GM12878 (cell line): ENCODE measurements at regions of chr14 and their contacts with region 1.

Region 1: DNA sequence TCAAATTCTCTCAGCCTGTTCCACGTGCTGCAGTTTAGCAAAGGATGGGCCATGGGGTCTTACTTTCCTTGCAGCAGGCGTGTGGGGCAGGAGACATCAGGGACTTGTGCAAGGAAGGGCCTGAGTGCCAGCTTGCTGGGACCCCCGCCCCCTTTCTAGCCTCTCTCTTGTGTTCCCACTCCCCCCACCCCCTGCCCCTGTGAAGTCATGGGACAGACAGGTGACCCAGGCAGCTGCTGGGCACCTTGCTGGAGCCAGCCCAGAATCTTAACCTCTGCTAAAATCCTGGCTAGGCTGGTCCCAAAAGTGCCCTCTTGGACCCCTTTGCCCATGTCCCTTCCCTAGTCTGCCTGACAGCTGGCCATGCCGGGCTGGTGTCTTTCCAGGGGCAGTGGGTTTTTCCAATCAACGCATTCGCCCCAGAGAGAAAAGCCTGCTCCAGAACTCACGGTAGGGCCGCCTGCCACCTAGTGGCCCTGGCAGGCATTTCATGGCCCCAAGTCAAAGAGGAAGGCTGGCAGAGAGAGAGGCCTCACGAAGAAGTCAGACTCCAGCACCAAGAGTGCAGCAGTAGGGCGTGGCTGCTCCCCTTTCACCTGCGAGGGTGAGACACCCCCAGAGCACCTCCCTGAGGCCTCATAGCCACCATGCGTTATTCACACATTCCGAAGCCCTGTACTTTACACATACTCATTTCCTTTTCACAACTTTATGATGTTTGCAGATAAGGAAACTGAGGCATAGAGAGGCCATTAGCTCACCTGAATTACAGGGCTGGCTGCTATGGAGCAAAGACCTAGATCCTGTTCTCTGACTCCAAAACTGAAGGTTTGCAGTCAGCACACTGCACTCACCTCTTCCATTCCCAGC is 67.4 kb downstream of the LGMN start:
- DNase-seq: no peak
- ATAC-seq: peak; percentile 52
- H3K4me3 ChIP-seq: no peak overlapping the region
- H3K27ac ChIP-seq: no peak overlapping the region
- H3K4me1 ChIP-seq: peaks cover 28% of the 10 kb centered on the region
- H3K27me3 ChIP-seq: no peaks in the 10 kb centered on the region
- CTCF ChIP-seq: peak; percentile 84 to 91 (median 90)
- EP300 ChIP-seq: no peak
- POLR2A ChIP-seq: no peak
- RAD21 ChIP-seq: peak; percentile 97

Region 2: DNA sequence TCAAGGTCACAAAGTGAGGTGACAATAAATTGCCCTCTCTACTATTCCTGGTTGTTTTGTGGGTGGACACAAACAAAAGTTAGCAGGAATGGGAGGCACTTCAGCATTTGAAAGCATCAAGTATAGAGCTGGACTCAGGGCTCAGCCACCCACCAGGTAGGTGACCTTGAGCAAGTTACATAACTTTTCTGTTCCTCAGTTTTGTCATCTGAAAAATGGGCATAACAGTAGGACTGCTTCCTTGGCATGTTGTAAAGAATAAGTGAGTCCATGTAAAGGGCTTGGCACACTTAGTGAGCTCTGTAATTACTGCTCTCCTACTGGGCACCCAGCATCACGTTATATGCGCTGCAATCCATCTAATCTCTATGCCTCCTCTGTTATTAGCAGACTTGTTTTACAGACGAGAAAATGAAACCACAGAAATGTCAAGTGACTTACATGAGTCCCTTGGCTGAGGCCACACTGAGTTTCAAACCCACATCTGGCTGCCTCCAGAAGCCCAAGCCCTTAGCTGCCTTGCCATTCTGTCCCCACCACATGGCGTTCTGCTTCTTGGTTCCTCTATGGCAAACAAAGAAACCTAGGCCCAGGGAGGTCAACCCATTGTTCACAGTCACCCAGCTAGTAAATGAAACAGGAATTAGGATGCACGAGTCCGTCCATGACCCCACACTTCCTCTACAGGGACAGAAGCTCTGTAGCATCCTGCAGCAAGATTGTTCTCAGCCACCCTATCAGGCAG is 421.2 kb before region 1 on chr14:
- CTCF ChIA-PET with region 1: no interaction called
- POLR2A ChIA-PET with region 1: no interaction called
- RAD21 ChIA-PET with region 1: interaction called, 3 read pairs
- SMC1A ChIA-PET with region 1: no interaction called
- in situ Hi-C with region 1: no loop called
- intact Hi-C with region 1: loop called (anchors 1 kb)
- DNase-seq: peak; percentile 95
- ATAC-seq: peak; percentile 87
- H3K4me3 ChIP-seq: peak overlapping the region; percentile 20; the same call in 1 of the 2 replicates
- H3K27ac ChIP-seq: peak overlapping the region; percentile 87
- H3K4me1 ChIP-seq: peaks cover 34% of the 10 kb centered on the region
- H3K27me3 ChIP-seq: no peaks in the 10 kb centered on the region; a peak in 1 of 4 replicates
- CTCF ChIP-seq: peak in 1 of 3 experiments; percentile 13; a peak in 1 of 6 replicates
- EP300 ChIP-seq: peak; percentile 52 to 79; a peak in 3 of 4 replicates
- POLR2A ChIP-seq: 0 out of 2 replicates have a peak, but pooled peaks have one; percentile 22
- RAD21 ChIP-seq: 0 out of 2 replicates have a peak, but pooled peaks have one; percentile 10

Region 3: GRCh38 chr14:92456215-92457015 is 224.6 kb before region 1 on chr14:
- CTCF ChIA-PET with region 1: interaction called, 7 read pairs
- POLR2A ChIA-PET with region 1: interaction called, 6 read pairs
- RAD21 ChIA-PET with region 1: interaction called, 6 read pairs
- SMC1A ChIA-PET with region 1: interaction called, 10 read pairs
- in situ Hi-C with region 1: no loop called
- intact Hi-C with region 1: loop called (anchors 2 kb)
- DNase-seq: no peak
- ATAC-seq: peak; percentile 84
- H3K4me3 ChIP-seq: no peak overlapping the region
- H3K27ac ChIP-seq: no peak overlapping the region
- H3K4me1 ChIP-seq: peaks cover 9% of the 10 kb centered on the region
- H3K27me3 ChIP-seq: no peaks in the 10 kb centered on the region
- CTCF ChIP-seq: peak; percentile 75 to 89 (median 76)
- EP300 ChIP-seq: no peak
- POLR2A ChIP-seq: no peak
- RAD21 ChIP-seq: peak; percentile 75

Region 4: GRCh38 chr14:92612988-92613658 is 67.9 kb before region 1 on chr14:
- CTCF ChIA-PET with region 1: interaction called, 10 read pairs
- POLR2A ChIA-PET with region 1: no interaction called
- RAD21 ChIA-PET with region 1: interaction called, 13 read pairs
- SMC1A ChIA-PET with region 1: interaction called, 14 read pairs
- in situ Hi-C with region 1: no loop called
- intact Hi-C with region 1: loop called (anchors 1 kb)
- DNase-seq: no peak
- ATAC-seq: peak; percentile 59
- H3K4me3 ChIP-seq: no peak overlapping the region
- H3K27ac ChIP-seq: no peak overlapping the region
- H3K4me1 ChIP-seq: peaks cover 8% of the 10 kb centered on the region
- H3K27me3 ChIP-seq: no peaks in the 10 kb centered on the region
- CTCF ChIP-seq: peak; percentile 90 to 91 (median 90)
- EP300 ChIP-seq: no peak
- POLR2A ChIP-seq: no peak
- RAD21 ChIP-seq: peak; percentile 81

Region 5: DNA sequence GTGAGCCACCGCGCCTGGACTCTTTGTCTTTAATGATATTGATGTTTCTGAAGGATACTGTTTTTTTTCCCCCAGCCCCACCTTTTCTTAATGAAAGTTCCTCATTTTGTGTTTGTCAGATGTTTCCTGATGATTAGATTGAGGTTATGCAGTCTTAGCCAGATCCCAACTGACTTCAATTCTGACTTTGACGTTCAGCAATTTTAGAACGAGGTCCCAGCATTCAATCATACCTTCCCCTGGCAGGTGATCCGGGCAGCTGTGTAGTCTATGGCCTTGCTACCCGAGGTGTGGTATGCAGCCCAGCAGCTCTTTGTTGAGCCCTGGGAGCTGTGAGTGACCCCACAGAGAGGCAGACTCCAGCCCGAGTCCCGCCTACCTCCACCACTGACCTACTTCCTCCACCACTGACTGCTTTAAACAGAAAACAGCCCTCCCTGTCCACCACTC is 15.3 kb before region 1 on chr14:
- CTCF ChIA-PET with region 1: interaction called, 7 read pairs
- POLR2A ChIA-PET with region 1: interaction called, 8 read pairs
- RAD21 ChIA-PET with region 1: interaction called, 5 read pairs
- SMC1A ChIA-PET with region 1: interaction called, 14 read pairs
- in situ Hi-C with region 1: no loop called
- intact Hi-C with region 1: no loop called
- DNase-seq: no peak
- ATAC-seq: peak; percentile 20
- H3K4me3 ChIP-seq: no peak overlapping the region
- H3K27ac ChIP-seq: peak overlapping the region; percentile 43
- H3K4me1 ChIP-seq: peaks cover 27% of the 10 kb centered on the region
- H3K27me3 ChIP-seq: no peaks in the 10 kb centered on the region
- CTCF ChIP-seq: no peak
- EP300 ChIP-seq: no peak
- POLR2A ChIP-seq: no peak
- RAD21 ChIP-seq: no peak